Common myeloid progenitor, CD34-positive (primary cell): ENCODE measurements at regions of chr1 and their contacts with region 1.

Region 1: DNA sequence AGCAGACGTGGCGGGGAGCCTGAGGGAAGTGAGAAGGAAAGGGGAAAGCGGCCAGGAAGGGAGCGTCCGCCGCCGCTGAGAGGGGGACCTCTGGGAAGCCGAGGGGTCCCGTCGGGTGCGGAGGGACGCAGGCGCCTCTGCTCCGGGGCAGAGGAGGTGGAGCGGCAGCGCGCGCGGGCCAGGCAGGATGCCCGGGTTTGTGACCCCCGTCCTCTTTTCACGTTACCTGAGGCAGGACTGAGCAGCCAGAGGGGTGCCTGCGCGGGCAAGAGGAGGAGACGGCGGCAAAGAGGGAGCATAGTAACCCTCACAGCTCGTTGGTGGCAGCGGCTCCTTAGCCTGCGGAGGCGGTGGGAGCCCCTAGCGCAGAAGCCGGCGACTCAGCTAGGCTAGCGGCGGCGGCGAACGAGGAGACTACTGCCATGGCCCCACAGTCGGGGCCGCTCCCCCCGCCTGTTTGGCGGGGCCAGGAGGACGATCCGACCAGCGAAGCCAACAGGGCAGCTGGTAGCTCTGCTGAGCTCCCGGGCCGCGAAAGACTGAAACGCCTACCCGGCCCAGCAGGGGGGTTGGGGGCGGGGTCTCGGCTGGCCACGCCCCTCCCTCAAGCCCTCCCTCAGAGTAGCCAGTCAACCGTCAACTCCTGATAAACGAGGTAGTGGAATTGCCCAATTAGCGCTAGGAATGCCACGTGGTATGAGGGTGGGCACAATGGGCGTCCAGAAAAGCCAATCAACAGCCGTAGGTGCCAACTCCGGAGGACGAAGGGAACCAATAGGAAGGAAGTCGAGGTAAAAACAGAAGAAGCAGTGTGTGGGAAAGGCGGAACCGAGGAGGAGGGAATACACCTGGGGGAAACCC is at the start of gene TESK2:
- DNase-seq: peak; percentile 100
- H3K4me3 ChIP-seq: peak within 1 kb of the TSS; percentile 77 to 95 (median 90)
- H3K27ac ChIP-seq: peak within 1 kb of the TSS; percentile 12 to 61
- H3K4me1 ChIP-seq: peaks cover 5 to 20% (median 15%) of the 10 kb centered on the region in 4 experiments
- H3K27me3 ChIP-seq: no peaks in the 10 kb centered on the region

Region 2: GRCh38 chr1:45018599-45019230 is 472.1 kb before region 1 on chr1:
- CTCF ChIA-PET with region 1: interaction called, 37 read pairs
- POLR2A ChIA-PET with region 1: no interaction called
- DNase-seq: peak; percentile 62 to 78 (median 71)
- H3K4me3 ChIP-seq: no peak overlapping the region
- H3K27ac ChIP-seq: no peak overlapping the region
- H3K4me1 ChIP-seq: peaks cover 6 to 40% (median 19%) of the 10 kb centered on the region in 4 experiments
- H3K27me3 ChIP-seq: no peaks in the 10 kb centered on the region

Region 3: GRCh38 chr1:45339789-45340570 is 150.9 kb before region 1 on chr1 and contains the starts of genes MUTYH and TOE1:
- CTCF ChIA-PET with region 1: interaction called, 10 read pairs
- POLR2A ChIA-PET with region 1: interaction called, 3 read pairs
- DNase-seq: peak; percentile 90 to 95 (median 93)
- H3K4me3 ChIP-seq: peak within 1 kb of the TSS; percentile 49 to 95 (median 91)
- H3K27ac ChIP-seq: peak within 1 kb of the TSS; percentile 92 to 96
- H3K4me1 ChIP-seq: peaks cover 15 to 38% (median 34%) of the 10 kb centered on the region in 4 experiments
- H3K27me3 ChIP-seq: no peaks in the 10 kb centered on the region

Region 4: GRCh38 chr1:45359882-45360513 is 130.9 kb before region 1 on chr1:
- CTCF ChIA-PET with region 1: interaction called, 190 read pairs
- POLR2A ChIA-PET with region 1: interaction called, 3 read pairs
- DNase-seq: peak; percentile 68 to 87 (median 81)
- H3K4me3 ChIP-seq: peak overlapping the region in 2 of 7 experiments; percentile 7 to 66
- H3K27ac ChIP-seq: no peak overlapping the region
- H3K4me1 ChIP-seq: peaks cover 2 to 25% (median 5%) of the 10 kb centered on the region in 4 experiments
- H3K27me3 ChIP-seq: no peaks in the 10 kb centered on the region

Region 5: DNA sequence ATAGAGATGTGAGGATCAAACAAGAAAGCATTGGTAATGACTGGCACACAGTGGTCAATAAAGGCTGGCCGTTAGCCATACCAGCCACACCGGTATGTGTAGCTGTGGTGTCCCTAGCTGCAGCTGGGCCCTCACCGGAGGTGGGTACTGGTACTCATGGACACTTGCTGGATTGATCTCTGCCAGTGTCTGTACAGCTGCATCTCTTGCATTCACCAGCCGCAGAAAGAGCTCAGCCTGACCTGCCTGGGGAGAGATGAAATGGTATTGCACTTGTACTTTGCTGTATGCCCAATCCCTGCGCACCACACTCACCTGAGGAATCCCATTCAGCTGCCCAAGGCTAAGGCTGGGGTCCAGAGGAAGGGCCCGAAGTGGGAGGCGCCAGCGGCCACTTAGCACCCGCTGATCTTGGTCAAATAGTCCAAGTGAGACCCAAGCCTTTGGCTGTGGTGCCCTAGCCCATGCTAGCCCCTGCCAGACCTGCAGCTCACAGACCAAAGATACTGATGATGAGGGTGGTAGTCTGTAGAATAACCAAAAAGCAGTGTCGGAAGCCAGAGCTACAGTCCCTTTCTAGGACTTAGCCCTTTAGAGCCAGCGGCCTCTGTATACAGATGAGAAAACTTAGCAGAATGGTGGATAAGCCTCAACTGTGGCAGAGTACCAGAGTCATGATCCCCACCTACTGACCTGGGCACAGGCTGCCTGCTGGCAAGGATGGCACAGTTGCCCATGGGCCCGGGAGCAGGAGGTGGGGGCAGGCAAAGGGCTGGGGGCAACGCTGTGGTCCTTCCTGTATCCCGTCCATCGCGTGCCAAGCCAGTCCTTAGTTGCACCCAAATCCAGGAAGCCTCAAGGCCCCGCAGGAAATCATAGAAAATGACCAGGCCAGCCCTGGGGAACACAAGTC is 130.0 kb after region 1 on chr1:
- CTCF ChIA-PET with region 1: no interaction called
- POLR2A ChIA-PET with region 1: no interaction called
- DNase-seq: no peak
- H3K4me3 ChIP-seq: no peak overlapping the region
- H3K27ac ChIP-seq: peak overlapping the region in 1 of 2 experiments; percentile 40
- H3K4me1 ChIP-seq: peaks cover 0 to 5% (median 2%) of the 10 kb centered on the region in 4 experiments
- H3K27me3 ChIP-seq: no peaks in the 10 kb centered on the region